ENCODE measurements at regions of chr11 and their contacts with region 1.

Region 1: DNA sequence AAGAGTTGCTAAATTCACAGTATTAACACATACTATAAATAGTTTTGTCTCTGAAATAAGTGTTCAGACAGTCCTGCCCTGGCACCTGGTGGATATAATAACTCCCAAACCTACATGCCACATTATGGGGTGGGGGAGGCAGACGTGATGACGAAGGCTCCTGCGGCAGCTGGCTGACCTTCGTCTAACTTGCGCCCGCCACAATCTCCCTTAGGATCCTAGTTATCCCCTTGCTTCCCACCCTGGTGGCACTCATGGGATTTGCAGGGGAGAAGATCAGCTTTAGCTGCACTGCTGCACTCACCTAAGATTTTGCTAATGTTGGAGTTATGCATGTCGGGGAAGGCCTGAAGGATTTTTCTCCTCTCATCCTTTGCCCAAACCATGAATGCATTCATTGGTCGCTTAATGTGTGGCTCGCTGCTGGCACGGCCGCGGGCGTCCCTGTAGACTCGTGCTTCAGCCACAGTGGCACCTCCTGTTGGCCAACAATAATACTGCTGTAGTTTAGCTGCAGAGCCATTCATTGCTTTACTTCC is 367.6 kb downstream of the SOX6 start:
- DNase-seq: no peak
- ATAC-seq: peak; percentile 82
- H3K4me3 ChIP-seq: no peak overlapping the region
- H3K27ac ChIP-seq: no peak overlapping the region
- H3K4me1 ChIP-seq: no peaks in the 10 kb centered on the region
- H3K27me3 ChIP-seq: no peaks in the 10 kb centered on the region
- CTCF ChIP-seq: peak in 2 of 3 experiments; percentile 3 to 40; a peak in 2 of 6 replicates
- EP300 ChIP-seq: no peak
- POLR2A ChIP-seq: no peak
- RAD21 ChIP-seq: peak; percentile 38; the same call in 1 of the 2 replicates

Region 2: DNA sequence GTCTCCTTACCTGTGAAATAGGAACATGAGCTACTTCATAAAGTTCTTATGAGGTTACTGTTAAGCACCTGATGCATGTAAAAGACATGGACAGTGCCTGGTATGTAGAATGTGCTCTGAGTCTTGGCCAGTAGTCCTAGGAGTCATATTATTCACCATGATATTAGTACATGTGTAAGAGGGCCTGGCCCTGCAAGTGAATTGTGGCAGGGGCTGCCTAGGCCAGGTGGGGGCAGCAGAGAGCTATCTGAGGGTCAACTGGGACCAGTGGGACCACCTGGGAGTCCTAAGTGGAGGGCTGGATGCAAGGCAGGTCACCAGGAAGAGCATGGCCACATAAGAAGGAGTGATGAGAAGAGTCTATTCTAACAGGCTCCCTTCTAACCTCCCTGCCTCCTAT is 161.9 kb before region 1 on chr11:
- CTCF ChIA-PET with region 1: interaction called, 11 read pairs
- POLR2A ChIA-PET with region 1: no interaction called
- RAD21 ChIA-PET with region 1: interaction called, 3 read pairs
- SMC1A ChIA-PET with region 1: no interaction called
- in situ Hi-C with region 1: no loop called
- intact Hi-C with region 1: loop called (anchors 5 kb)
- DNase-seq: no peak
- ATAC-seq: peak; percentile 91
- H3K4me3 ChIP-seq: no peak overlapping the region
- H3K27ac ChIP-seq: no peak overlapping the region
- H3K4me1 ChIP-seq: no peaks in the 10 kb centered on the region
- H3K27me3 ChIP-seq: no peaks in the 10 kb centered on the region
- CTCF ChIP-seq: peak; percentile 46 to 55 (median 53)
- EP300 ChIP-seq: no peak
- POLR2A ChIP-seq: no peak
- RAD21 ChIP-seq: peak; percentile 51; the same call in 1 of the 2 replicates

Region 3: GRCh38 chr11:15941201-15941770 is 47.5 kb before region 1 on chr11:
- CTCF ChIA-PET with region 1: interaction called, 30 read pairs
- POLR2A ChIA-PET with region 1: no interaction called
- RAD21 ChIA-PET with region 1: interaction called, 17 read pairs
- SMC1A ChIA-PET with region 1: interaction called, 13 read pairs
- in situ Hi-C with region 1: no loop called
- intact Hi-C with region 1: loop called (anchors 2 kb)
- DNase-seq: no peak
- ATAC-seq: peak; percentile 90
- H3K4me3 ChIP-seq: no peak overlapping the region
- H3K27ac ChIP-seq: no peak overlapping the region
- H3K4me1 ChIP-seq: no peaks in the 10 kb centered on the region
- H3K27me3 ChIP-seq: no peaks in the 10 kb centered on the region
- CTCF ChIP-seq: peak; percentile 71 to 94 (median 88)
- EP300 ChIP-seq: no peak
- POLR2A ChIP-seq: no peak
- RAD21 ChIP-seq: peak; percentile 73

Region 4: DNA sequence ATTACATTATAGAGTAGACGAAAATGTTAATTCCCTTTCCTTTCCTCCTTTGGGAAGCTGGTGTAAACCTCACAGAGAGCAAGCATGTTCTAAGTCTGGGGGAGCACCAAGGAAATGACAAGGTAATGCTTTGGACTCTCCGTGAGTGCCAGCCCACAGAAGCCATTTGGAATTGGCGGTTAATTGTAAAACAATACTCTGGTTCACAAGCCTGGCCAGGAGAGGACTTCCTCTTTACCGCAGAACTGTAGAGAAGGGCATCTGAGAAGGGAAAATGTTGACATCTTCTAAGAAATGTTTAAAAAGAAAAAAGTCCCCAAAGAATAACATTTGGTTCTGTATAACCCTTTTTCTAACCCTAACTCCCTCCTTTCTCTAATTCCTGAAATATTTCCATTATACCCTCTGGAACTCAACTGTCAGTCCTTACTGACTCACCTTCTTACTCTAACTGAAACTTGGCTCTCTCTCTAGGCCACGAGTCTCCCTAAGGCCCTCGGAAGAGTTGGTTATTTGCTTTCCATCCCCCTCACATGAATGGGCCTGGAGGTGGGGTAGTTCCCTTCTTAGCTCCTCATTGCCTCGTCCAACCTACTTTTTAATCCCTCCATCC is 12.2 kb before region 1 on chr11:
- CTCF ChIA-PET with region 1: interaction called, 14 read pairs
- POLR2A ChIA-PET with region 1: no interaction called
- RAD21 ChIA-PET with region 1: no interaction called
- SMC1A ChIA-PET with region 1: interaction called, 6 read pairs
- in situ Hi-C with region 1: no loop called
- intact Hi-C with region 1: no loop called
- DNase-seq: no peak
- ATAC-seq: peak; percentile 29; the same call in 1 of the 3 replicates
- H3K4me3 ChIP-seq: no peak overlapping the region
- H3K27ac ChIP-seq: no peak overlapping the region
- H3K4me1 ChIP-seq: no peaks in the 10 kb centered on the region
- H3K27me3 ChIP-seq: no peaks in the 10 kb centered on the region
- CTCF ChIP-seq: no peak
- EP300 ChIP-seq: no peak
- POLR2A ChIP-seq: no peak
- RAD21 ChIP-seq: no peak

Region 5: DNA sequence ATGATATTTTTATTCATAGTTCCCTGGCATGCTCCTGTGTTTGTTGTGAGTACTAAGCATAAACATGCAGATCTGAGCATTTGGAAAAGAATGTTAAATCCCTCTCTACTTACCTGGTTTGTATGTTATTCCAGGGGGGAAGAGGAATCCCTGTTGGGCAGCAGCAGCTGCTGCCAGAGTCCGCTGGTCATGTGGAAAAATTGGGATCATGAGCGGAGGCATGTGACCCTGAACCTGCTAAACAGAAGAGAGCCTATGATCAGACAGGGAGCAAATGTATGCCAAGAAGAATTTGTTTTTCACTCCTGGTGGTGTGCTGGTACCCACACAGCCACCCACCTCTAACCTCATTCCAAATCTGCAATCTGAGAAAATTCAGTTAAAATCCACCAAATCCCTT is 122.9 kb after region 1 on chr11:
- CTCF ChIA-PET with region 1: no interaction called
- POLR2A ChIA-PET with region 1: no interaction called
- RAD21 ChIA-PET with region 1: no interaction called
- SMC1A ChIA-PET with region 1: no interaction called
- in situ Hi-C with region 1: no loop called
- intact Hi-C with region 1: no loop called
- DNase-seq: no peak
- ATAC-seq: no peak
- H3K4me3 ChIP-seq: no peak overlapping the region
- H3K27ac ChIP-seq: no peak overlapping the region
- H3K4me1 ChIP-seq: no peaks in the 10 kb centered on the region
- H3K27me3 ChIP-seq: no peaks in the 10 kb centered on the region
- CTCF ChIP-seq: no peak
- EP300 ChIP-seq: no peak
- POLR2A ChIP-seq: no peak
- RAD21 ChIP-seq: no peak

Region 6: DNA sequence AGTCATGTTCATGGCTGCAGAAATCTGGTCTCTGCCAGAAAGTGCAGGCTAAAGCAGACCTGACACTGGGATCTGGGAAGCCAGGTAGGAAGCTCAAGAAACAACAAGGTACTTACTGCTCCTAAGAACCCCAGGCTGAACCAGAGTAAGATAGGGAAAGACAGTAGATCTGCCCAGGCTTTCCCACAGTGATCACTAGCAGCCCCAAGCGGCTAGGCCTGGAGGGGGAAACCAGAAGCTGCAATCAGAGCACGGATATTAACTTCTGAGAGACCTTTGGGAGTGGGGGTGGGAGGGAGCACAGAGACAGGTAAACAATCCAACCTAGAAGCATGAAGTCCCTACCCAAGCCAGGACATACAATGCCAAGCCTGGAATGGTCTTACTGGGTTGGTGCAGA is 614.5 kb after region 1 on chr11:
- CTCF ChIA-PET with region 1: no interaction called
- POLR2A ChIA-PET with region 1: no interaction called
- RAD21 ChIA-PET with region 1: no interaction called
- SMC1A ChIA-PET with region 1: no interaction called
- in situ Hi-C with region 1: no loop called
- intact Hi-C with region 1: no loop called
- DNase-seq: no peak
- ATAC-seq: no peak
- H3K4me3 ChIP-seq: no peak overlapping the region
- H3K27ac ChIP-seq: no peak overlapping the region
- H3K4me1 ChIP-seq: no peaks in the 10 kb centered on the region
- H3K27me3 ChIP-seq: peaks cover 20 to 42% of the 10 kb centered on the region in 2 experiments
- CTCF ChIP-seq: no peak
- EP300 ChIP-seq: no peak
- POLR2A ChIP-seq: no peak
- RAD21 ChIP-seq: no peak

Measured in GM12878 (cell line).